ENCODE measurements at regions of chr19 and their contacts with region 1.

Region 1: DNA sequence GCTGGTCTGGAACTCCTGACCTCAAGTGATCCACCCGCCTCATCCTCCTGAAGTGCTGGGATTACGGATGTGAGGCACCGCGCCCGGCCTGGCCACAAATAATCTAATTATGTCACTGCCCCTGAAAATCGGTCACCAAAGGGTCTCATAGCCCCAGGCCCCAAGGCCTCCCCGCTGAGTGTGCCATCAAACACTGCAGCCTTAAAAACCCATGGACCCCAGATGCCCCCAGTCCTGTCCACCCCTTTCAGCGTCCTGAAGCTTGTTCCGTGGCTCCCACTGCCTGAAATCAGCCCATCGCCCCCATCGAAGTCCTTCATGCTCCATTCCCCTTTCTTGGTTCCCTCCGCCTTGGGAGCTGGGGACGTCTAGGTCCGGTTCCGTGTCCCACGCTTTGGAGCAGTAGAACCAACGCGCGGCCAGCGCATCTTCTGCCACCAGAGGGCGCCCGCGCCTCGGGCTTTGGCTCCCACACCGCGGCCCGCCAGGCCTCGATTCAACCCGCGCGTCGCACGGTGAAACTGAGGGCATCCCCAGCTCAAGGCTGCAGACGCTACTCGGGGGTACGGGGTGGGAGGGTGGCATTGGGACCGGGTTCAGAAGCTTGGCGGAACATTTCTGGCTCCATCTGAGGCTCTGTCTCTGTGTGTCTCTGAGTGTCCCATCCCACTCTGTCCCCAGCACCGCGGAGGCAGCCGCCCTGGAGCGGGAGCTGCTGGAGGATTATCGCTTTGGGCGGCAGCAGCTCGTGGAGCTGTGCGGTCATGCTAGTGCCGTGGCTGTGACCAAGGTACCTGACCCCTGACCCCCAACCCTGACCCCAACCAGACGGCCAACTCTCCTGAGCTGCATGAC is 3.5 kb downstream of the YJEFN3 start:
- DNase-seq: peak; percentile 79 to 87 (median 80)
- ATAC-seq: peak; percentile 89
- H3K4me3 ChIP-seq: no peak overlapping the region
- H3K27ac ChIP-seq: no peak overlapping the region
- H3K4me1 ChIP-seq: peaks cover 5 to 25% of the 10 kb centered on the region in 2 experiments
- H3K27me3 ChIP-seq: no peaks in the 10 kb centered on the region
- CTCF ChIP-seq: peak; percentile 89 to 94 (median 90)
- EP300 ChIP-seq: no peak
- POLR2A ChIP-seq: 0 out of 2 replicates have a peak, but pooled peaks have one; percentile 33
- RAD21 ChIP-seq: peak; percentile 87 to 91

Region 2: DNA sequence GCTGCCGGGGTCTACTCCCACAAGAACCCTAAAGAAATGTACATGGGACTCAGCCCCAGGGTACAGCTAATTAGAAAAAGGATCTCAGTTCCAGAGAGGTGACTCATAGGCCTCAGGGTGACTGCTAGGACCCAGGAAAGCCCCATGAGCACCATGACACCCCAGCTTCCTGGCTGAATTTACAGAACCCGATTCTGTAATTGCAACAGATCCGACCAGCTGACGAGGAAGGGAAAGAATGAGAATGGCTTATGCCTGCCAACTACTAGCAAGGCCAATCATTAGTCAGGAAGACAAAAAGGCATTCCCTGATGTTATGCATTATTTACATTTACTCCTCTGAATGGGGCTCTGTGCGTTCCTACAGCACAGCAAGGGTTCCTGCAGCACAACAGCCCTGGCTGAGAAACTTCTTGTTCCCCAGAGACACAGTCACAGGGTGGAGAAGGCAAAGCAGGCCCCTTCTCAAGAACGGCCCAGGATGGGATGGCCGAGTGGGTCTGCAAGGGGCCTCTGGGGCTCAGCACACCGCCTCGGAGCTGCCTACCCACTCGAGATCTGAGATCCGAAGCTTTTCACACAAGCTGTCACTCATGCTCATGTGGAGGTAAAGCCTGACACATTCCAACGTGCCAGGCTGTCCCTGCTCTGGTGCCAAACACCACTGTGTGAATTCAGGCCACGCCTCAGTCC is 59.1 kb after region 1 on chr19:
- CTCF ChIA-PET with region 1: no interaction called
- POLR2A ChIA-PET with region 1: no interaction called
- in situ Hi-C with region 1: no loop called
- intact Hi-C with region 1: no loop called
- DNase-seq: no peak
- ATAC-seq: peak; percentile 40; the same call in 2 of the 3 replicates
- H3K4me3 ChIP-seq: no peak overlapping the region
- H3K27ac ChIP-seq: no peak overlapping the region
- H3K4me1 ChIP-seq: no peaks in the 10 kb centered on the region; a peak in 1 of 5 replicates
- H3K27me3 ChIP-seq: peaks cover 0 to 8% of the 10 kb centered on the region in 2 experiments; a peak in 2 of 5 replicates
- CTCF ChIP-seq: no peak
- EP300 ChIP-seq: no peak
- POLR2A ChIP-seq: no peak
- RAD21 ChIP-seq: no peak

Region 3: GRCh38 chr19:19643158-19644053 is 111.2 kb after region 1 on chr19 and contains the start of gene GMIP:
- CTCF ChIA-PET with region 1: interaction called, 30 read pairs
- POLR2A ChIA-PET with region 1: no interaction called
- in situ Hi-C with region 1: loop called (anchors 25 kb)
- intact Hi-C with region 1: loop called (anchors 2 kb)
- DNase-seq: peak; percentile 84 to 94 (median 92)
- ATAC-seq: peak; percentile 94
- H3K4me3 ChIP-seq: peak within 1 kb of the TSS; percentile 84
- H3K27ac ChIP-seq: peak within 1 kb of the TSS; percentile 75
- H3K4me1 ChIP-seq: peaks cover 3 to 18% of the 10 kb centered on the region in 2 experiments; a peak in 3 of 5 replicates
- H3K27me3 ChIP-seq: no peaks in the 10 kb centered on the region
- CTCF ChIP-seq: peak; percentile 80 to 87 (median 82)
- EP300 ChIP-seq: no peak
- POLR2A ChIP-seq: peak; percentile 61
- RAD21 ChIP-seq: peak; percentile 66 to 77
- polyA plus RNA-seq, gene GMIP: 0.14 to 0.38 TPM

Region 4: GRCh38 chr19:19956434-19957075 is 424.4 kb after region 1 on chr19:
- CTCF ChIA-PET with region 1: no interaction called
- POLR2A ChIA-PET with region 1: interaction called, 3 read pairs
- in situ Hi-C with region 1: no loop called
- intact Hi-C with region 1: loop called (anchors 2 kb)
- DNase-seq: peak in 1 of 4 experiments; percentile 8
- ATAC-seq: peak; percentile 73
- H3K4me3 ChIP-seq: no peak overlapping the region
- H3K27ac ChIP-seq: no peak overlapping the region
- H3K4me1 ChIP-seq: no peaks in the 10 kb centered on the region
- H3K27me3 ChIP-seq: no peaks in the 10 kb centered on the region
- CTCF ChIP-seq: no peak
- EP300 ChIP-seq: no peak
- POLR2A ChIP-seq: no peak
- RAD21 ChIP-seq: no peak